Prostate gland (tissue), 2 donors: ENCODE measurements at regions of chr7 and their contacts with region 1.

Region 1: GRCh38 chr7:71733107-71733870 is 601.3 kb downstream of the GALNT17 start:
- DNase-seq: peak; percentile 82
- H3K4me3 ChIP-seq: peak overlapping the region in 1 of 2 donors; percentile 23
- H3K27ac ChIP-seq: no peak overlapping the region
- H3K4me1 ChIP-seq: no peaks in the 10 kb centered on the region
- H3K27me3 ChIP-seq: no peaks in the 10 kb centered on the region
- CTCF ChIP-seq: peak; percentile 84 to 92 (median 90)
- POLR2A ChIP-seq: no peak

Region 2: GRCh38 chr7:70474639-70475234 is 1258.6 kb before region 1 on chr7:
- intact Hi-C with region 1: no loop called
- DNase-seq: no peak
- H3K4me3 ChIP-seq: no peak overlapping the region
- H3K27ac ChIP-seq: no peak overlapping the region
- H3K4me1 ChIP-seq: no peaks in the 10 kb centered on the region
- H3K27me3 ChIP-seq: no peaks in the 10 kb centered on the region
- CTCF ChIP-seq: no peak
- POLR2A ChIP-seq: no peak

Region 3: DNA sequence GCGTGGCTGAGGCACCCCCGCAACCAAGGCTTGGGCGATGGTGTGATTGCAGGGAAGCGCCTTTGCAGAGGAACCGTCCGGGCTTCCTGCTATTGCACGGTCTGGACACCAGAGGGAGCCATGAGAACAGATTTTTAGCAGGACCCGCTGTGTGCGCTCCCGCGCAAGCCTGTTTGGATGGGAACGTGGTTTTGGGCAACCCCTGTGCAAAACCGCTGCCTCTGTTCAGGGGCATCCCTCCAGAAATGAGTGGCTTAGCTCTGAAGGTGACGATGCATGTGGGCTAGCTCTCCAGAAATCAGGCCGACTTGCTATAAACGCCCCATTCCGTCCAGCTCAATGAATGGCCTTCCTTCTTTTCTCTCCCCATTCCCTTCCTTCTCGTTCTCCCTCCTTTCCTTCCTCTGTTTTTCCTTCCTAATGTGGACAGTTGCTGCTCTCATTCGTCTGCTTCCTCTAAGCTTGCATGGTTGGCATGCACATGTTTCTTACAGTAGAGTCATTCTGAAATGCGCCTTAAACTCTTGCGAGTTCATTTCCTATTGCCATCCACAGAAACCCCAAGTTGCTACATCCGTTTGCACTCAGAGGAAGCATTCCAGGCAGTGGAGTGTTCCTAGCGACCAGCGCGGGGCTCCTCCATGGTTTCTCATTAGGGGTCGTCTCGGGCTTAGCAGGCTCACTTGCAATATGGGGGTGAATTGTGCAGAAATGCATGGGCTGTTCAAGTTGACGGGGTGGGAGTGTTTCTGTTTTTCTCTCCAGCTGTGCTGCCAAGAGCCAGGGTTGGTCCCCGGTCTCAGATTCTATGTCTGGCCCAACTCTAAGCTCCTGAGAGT is 903.8 kb before region 1 on chr7:
- intact Hi-C with region 1: loop called (anchors 10 kb)
- DNase-seq: peak; percentile 56
- H3K4me3 ChIP-seq: no peak overlapping the region
- H3K27ac ChIP-seq: no peak overlapping the region
- H3K4me1 ChIP-seq: no peaks in the 10 kb centered on the region
- H3K27me3 ChIP-seq: no peaks in the 10 kb centered on the region
- CTCF ChIP-seq: peak; percentile 60 to 85 (median 81)
- POLR2A ChIP-seq: no peak

Region 4: DNA sequence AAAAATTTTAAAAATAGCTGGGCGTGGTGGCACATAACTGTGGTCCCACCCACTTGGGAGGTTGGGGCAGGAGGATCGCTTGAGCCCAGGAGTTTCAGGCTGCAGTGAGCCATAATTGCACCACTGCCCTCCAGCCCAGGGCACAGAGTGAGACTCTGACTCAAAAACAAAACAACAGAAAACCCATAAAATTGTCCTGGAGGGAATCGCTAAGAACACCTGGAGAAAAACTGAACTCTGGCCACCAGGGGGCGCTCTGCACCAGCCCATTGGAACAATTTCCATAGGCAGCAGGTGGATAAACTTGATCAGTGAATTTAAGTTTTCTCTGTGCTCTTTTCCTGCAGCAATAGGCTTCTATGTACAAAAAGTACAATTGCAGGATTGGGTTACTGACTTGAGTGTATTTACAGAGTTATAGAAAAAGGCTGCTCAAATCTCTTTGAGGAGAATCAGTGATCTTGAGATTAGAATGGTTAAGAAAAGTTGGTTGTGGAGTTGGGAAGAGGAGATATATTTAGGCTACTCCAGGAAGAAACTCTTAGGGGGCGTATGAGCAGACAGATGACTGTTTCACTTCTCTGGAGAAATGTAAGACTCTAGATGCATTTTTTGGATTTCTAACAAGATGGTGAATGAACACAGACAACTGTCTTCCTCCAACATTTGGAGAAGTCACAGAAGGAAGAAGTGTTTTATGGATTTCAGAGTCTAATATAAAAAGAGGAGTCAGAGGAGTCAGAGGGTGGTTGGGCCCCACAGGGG is 876.2 kb before region 1 on chr7:
- intact Hi-C with region 1: loop called (anchors 1 kb)
- DNase-seq: peak; percentile 74
- H3K4me3 ChIP-seq: no peak overlapping the region
- H3K27ac ChIP-seq: no peak overlapping the region
- H3K4me1 ChIP-seq: no peaks in the 10 kb centered on the region
- H3K27me3 ChIP-seq: no peaks in the 10 kb centered on the region
- CTCF ChIP-seq: peak; percentile 81 to 100 (median 90)
- POLR2A ChIP-seq: no peak

Region 5: GRCh38 chr7:71237945-71238344 is 495.3 kb before region 1 on chr7:
- intact Hi-C with region 1: loop called (anchors 5 kb)
- DNase-seq: peak; percentile 48
- H3K4me3 ChIP-seq: no peak overlapping the region
- H3K27ac ChIP-seq: peak overlapping the region; percentile 60 to 77
- H3K4me1 ChIP-seq: peaks cover 3% of the 10 kb centered on the region
- H3K27me3 ChIP-seq: no peaks in the 10 kb centered on the region
- CTCF ChIP-seq: peak in 1 of 4 experiments; percentile 47
- POLR2A ChIP-seq: no peak